Spleen (tissue), 13 donors: ENCODE measurements at regions of chr1 and their contacts with region 1.

Region 1: DNA sequence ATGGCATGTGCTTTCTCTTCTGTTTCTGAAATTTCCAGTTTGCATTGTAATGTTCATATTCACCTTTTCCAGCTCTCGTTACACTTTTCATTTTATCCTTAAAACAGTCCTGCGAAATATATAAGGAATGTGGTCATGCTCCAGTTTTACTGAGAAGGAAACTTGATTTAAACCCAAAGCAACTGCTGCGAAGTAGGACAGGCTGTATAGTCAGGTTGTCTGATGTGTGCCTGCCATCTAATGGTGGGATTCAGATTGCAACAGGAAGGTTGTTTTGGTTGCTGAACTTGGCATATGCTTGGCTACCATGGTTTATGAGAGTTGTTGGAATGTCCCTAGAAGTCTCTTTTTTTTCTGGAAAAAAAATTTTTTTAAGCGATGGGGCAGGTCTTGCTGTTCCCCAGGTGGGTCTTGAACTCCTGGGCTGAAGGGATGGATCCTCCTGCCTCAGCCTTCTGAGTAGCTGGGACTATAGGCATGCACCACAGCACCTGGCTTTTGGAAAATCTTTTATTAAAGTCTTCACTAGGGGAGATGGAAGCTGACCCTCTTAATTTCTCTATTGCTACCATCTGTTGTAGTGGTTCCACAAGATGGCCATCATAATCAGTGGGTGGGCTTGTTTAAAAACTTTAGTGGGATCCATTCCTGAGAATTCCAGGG is 86.9 kb downstream of the UCK2 start:
- DNase-seq: no peak
- H3K4me3 ChIP-seq: no peak overlapping the region
- H3K27ac ChIP-seq: no peak overlapping the region
- H3K4me1 ChIP-seq: peaks cover 0 to 21% (median 15%) of the 10 kb centered on the region in 6 donors
- H3K27me3 ChIP-seq: no peaks in the 10 kb centered on the region
- CTCF ChIP-seq: peak; percentile 74 to 93 (median 85)
- POLR2A ChIP-seq: no peak

Region 2: GRCh38 chr1:165392634-165393571 is 521.4 kb before region 1 on chr1:
- intact Hi-C with region 1: loop called (anchors 5 kb)
- DNase-seq: peak; percentile 95
- H3K4me3 ChIP-seq: peak overlapping the region in 1 of 8 donors; percentile 33
- H3K27ac ChIP-seq: no peak overlapping the region
- H3K4me1 ChIP-seq: peaks cover 5 to 18% (median 12%) of the 10 kb centered on the region in 6 donors
- H3K27me3 ChIP-seq: peaks cover 0 to 100% (median 29%) of the 10 kb centered on the region in 7 donors
- CTCF ChIP-seq: peak; percentile 83 to 96 (median 92)
- POLR2A ChIP-seq: no peak

Region 3: GRCh38 chr1:165717918-165718515 is 196.2 kb before region 1 on chr1:
- intact Hi-C with region 1: loop called (anchors 5 kb)
- DNase-seq: no peak
- H3K4me3 ChIP-seq: no peak overlapping the region
- H3K27ac ChIP-seq: no peak overlapping the region
- H3K4me1 ChIP-seq: no peaks in the 10 kb centered on the region
- H3K27me3 ChIP-seq: no peaks in the 10 kb centered on the region
- CTCF ChIP-seq: peak in 10 of 11 experiments; percentile 19 to 65 (median 50)
- POLR2A ChIP-seq: no peak